ENCODE measurements at regions of chr6 and their contacts with region 1.

Region 1: GRCh38 chr6:37051138-37052026 is 45.9 kb downstream of the FGD2 start:
- DNase-seq: peak; percentile 59
- ATAC-seq: peak; percentile 88
- H3K4me3 ChIP-seq: no peak overlapping the region
- H3K27ac ChIP-seq: no peak overlapping the region
- H3K4me1 ChIP-seq: peaks cover 40% of the 10 kb centered on the region
- H3K27me3 ChIP-seq: no peaks in the 10 kb centered on the region
- CTCF ChIP-seq: peak; percentile 88 to 95 (median 93); a peak in 5 of 6 replicates
- EP300 ChIP-seq: no peak
- POLR2A ChIP-seq: no peak
- RAD21 ChIP-seq: peak; percentile 93

Region 2: GRCh38 chr6:37029249-37029971 is 22.0 kb before region 1 on chr6:
- CTCF ChIA-PET with region 1: interaction called, 16 read pairs
- POLR2A ChIA-PET with region 1: no interaction called
- RAD21 ChIA-PET with region 1: interaction called, 22 read pairs
- SMC1A ChIA-PET with region 1: interaction called, 16 read pairs
- in situ Hi-C with region 1: no loop called
- intact Hi-C with region 1: no loop called
- DNase-seq: no peak
- ATAC-seq: peak; percentile 90
- H3K4me3 ChIP-seq: no peak overlapping the region
- H3K27ac ChIP-seq: no peak overlapping the region
- H3K4me1 ChIP-seq: no peaks in the 10 kb centered on the region
- H3K27me3 ChIP-seq: no peaks in the 10 kb centered on the region
- CTCF ChIP-seq: peak; percentile 68 to 75 (median 72)
- EP300 ChIP-seq: no peak
- POLR2A ChIP-seq: no peak
- RAD21 ChIP-seq: peak; percentile 88

Region 3: DNA sequence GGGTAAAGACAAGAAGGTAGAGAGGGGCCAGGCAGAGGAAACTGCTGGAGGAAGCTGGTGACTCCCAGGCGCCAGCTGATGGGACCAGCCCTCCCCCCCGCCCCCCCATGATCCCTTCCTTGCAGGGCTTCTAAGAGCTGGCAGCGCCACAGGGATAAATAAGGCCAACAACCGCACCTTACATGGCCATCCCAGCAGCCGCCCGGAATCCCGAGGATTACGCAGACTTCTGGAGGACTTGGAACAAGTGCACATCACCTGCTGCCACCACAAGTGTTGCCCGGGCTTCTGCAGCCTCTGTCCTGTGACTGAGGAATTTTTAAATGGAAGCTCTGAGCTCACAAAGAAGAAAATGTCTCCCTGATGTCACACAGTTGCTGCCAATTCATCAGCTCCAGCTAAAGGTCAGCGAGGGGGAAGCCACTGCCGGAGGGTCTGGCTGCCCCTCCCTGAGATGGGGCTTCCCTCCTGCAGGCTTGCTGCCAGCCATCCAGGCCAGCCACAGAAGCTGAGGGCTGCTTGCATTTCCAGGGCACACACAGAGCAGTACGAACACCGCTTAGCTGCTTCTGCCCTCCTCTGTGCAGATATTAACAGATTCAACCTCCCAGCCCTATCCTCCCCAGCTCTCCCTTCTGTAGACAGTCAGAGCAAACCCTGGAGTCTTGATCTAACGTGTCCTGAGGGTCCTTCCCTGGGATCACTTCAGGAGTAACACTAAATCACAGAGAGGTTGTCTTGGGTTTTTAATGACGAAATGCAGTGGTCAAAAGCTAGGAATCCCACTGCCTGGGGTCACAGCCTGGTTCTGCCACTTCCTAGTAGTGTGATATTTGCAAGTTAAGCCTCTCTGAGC is 80.0 kb after region 1 on chr6:
- CTCF ChIA-PET with region 1: interaction called, 3 read pairs
- POLR2A ChIA-PET with region 1: no interaction called
- RAD21 ChIA-PET with region 1: interaction called, 5 read pairs
- SMC1A ChIA-PET with region 1: interaction called, 10 read pairs
- in situ Hi-C with region 1: no loop called
- intact Hi-C with region 1: no loop called
- DNase-seq: no peak
- ATAC-seq: no peak
- H3K4me3 ChIP-seq: no peak overlapping the region
- H3K27ac ChIP-seq: no peak overlapping the region
- H3K4me1 ChIP-seq: peaks cover 15% of the 10 kb centered on the region; the same call in 1 of the 2 replicates
- H3K27me3 ChIP-seq: no peaks in the 10 kb centered on the region
- CTCF ChIP-seq: no peak
- EP300 ChIP-seq: no peak
- POLR2A ChIP-seq: no peak
- RAD21 ChIP-seq: no peak

Region 4: GRCh38 chr6:37149745-37150144 is 98.4 kb after region 1 on chr6:
- CTCF ChIA-PET with region 1: interaction called, 11 read pairs
- POLR2A ChIA-PET with region 1: no interaction called
- RAD21 ChIA-PET with region 1: interaction called, 7 read pairs
- SMC1A ChIA-PET with region 1: interaction called, 10 read pairs
- in situ Hi-C with region 1: no loop called
- intact Hi-C with region 1: no loop called
- DNase-seq: no peak
- ATAC-seq: peak; percentile 38
- H3K4me3 ChIP-seq: no peak overlapping the region
- H3K27ac ChIP-seq: peak overlapping the region; percentile 51
- H3K4me1 ChIP-seq: peaks cover 40% of the 10 kb centered on the region
- H3K27me3 ChIP-seq: no peaks in the 10 kb centered on the region
- CTCF ChIP-seq: no peak
- EP300 ChIP-seq: no peak
- POLR2A ChIP-seq: no peak
- RAD21 ChIP-seq: no peak

Region 5: GRCh38 chr6:37160922-37161778 is 109.8 kb after region 1 on chr6:
- CTCF ChIA-PET with region 1: interaction called, 21 read pairs
- POLR2A ChIA-PET with region 1: interaction called, 4 read pairs
- RAD21 ChIA-PET with region 1: interaction called, 11 read pairs
- SMC1A ChIA-PET with region 1: interaction called, 266 read pairs
- in situ Hi-C with region 1: no loop called
- intact Hi-C with region 1: no loop called
- DNase-seq: peak; percentile 66
- ATAC-seq: peak; percentile 92
- H3K4me3 ChIP-seq: no peak overlapping the region
- H3K27ac ChIP-seq: peak overlapping the region; percentile 67
- H3K4me1 ChIP-seq: peaks cover 26% of the 10 kb centered on the region
- H3K27me3 ChIP-seq: no peaks in the 10 kb centered on the region
- CTCF ChIP-seq: no peak
- EP300 ChIP-seq: peak in 1 of 2 experiments; percentile 65; a peak in 1 of 4 replicates
- POLR2A ChIP-seq: no peak
- RAD21 ChIP-seq: no peak

Region 6: DNA sequence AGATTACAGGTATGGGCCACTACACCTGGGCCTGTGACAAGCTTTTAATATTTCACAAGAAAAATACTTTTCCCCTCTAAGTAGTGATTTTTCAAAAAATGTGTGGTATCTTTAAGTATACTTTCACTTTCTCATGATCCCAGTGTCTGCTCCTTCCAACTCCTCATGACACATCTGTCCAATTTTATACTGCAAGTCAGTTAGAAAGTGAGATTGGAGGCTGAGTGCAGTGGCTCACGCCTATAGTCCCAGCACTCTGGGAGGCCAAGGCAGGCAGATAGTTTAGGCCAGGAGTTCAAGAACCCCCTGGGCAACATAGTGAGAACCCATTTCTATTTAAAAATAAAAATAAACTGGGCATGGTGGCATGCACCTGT is 138.8 kb after region 1 on chr6:
- CTCF ChIA-PET with region 1: interaction called, 7 read pairs
- POLR2A ChIA-PET with region 1: interaction called, 4 read pairs
- RAD21 ChIA-PET with region 1: interaction called, 12 read pairs
- SMC1A ChIA-PET with region 1: no interaction called
- in situ Hi-C with region 1: no loop called
- intact Hi-C with region 1: no loop called
- DNase-seq: no peak
- ATAC-seq: no peak
- H3K4me3 ChIP-seq: no peak overlapping the region
- H3K27ac ChIP-seq: no peak overlapping the region
- H3K4me1 ChIP-seq: no peaks in the 10 kb centered on the region; the same call in 1 of the 2 replicates
- H3K27me3 ChIP-seq: no peaks in the 10 kb centered on the region
- CTCF ChIP-seq: no peak
- EP300 ChIP-seq: no peak
- POLR2A ChIP-seq: no peak
- RAD21 ChIP-seq: no peak

Region 7: GRCh38 chr6:37222125-37222967 is 171.0 kb after region 1 on chr6:
- CTCF ChIA-PET with region 1: interaction called, 10 read pairs
- POLR2A ChIA-PET with region 1: no interaction called
- RAD21 ChIA-PET with region 1: no interaction called
- SMC1A ChIA-PET with region 1: no interaction called
- in situ Hi-C with region 1: no loop called
- intact Hi-C with region 1: no loop called
- DNase-seq: peak; percentile 45
- ATAC-seq: peak; percentile 98
- H3K4me3 ChIP-seq: peak overlapping the region; percentile 71
- H3K27ac ChIP-seq: no peak overlapping the region
- H3K4me1 ChIP-seq: peaks cover 11% of the 10 kb centered on the region
- H3K27me3 ChIP-seq: no peaks in the 10 kb centered on the region
- CTCF ChIP-seq: no peak
- EP300 ChIP-seq: no peak
- POLR2A ChIP-seq: no peak; the same call in 1 of the 2 replicates
- RAD21 ChIP-seq: no peak

Region 8: DNA sequence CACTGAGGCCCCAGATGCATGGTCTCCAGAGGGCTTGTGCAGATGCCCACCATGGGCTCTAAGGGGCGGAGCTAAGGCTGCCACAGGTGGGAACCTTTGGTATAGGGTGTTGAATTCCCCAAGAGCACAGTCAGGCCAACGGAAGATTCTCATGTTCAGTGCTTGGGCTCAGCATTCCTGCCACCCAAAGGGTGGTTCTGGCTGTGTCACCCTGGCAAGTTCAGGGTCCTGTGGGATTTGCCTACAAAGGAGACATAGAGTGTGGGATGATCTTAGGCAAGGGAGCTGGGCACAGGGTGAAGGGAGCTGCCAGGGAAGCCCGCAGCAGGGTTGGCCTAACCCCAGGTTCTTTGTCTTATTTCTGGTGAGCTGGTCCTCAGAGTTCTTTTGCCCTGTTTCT is 421.2 kb after region 1 on chr6:
- CTCF ChIA-PET with region 1: no interaction called
- POLR2A ChIA-PET with region 1: no interaction called
- RAD21 ChIA-PET with region 1: no interaction called
- SMC1A ChIA-PET with region 1: no interaction called
- in situ Hi-C with region 1: no loop called
- intact Hi-C with region 1: no loop called
- DNase-seq: no peak
- ATAC-seq: no peak
- H3K4me3 ChIP-seq: no peak overlapping the region
- H3K27ac ChIP-seq: no peak overlapping the region
- H3K4me1 ChIP-seq: no peaks in the 10 kb centered on the region
- H3K27me3 ChIP-seq: no peaks in the 10 kb centered on the region
- CTCF ChIP-seq: no peak
- EP300 ChIP-seq: no peak
- POLR2A ChIP-seq: no peak
- RAD21 ChIP-seq: no peak

Measured in GM12878 (cell line).